BJ (cell line): ENCODE measurements at regions of chr17 and their contacts with region 1.

Region 1: GRCh38 chr17:28951991-28952975 is 965 bp upstream of the PHF12 start:
- DNase-seq: peak; percentile 98
- H3K4me3 ChIP-seq: peak overlapping the region; percentile 49
- H3K27me3 ChIP-seq: no peaks in the 10 kb centered on the region
- CTCF ChIP-seq: no peak

Region 2: GRCh38 chr17:28717578-28718333 is 234.5 kb before region 1 on chr17 and contains the start of gene RAB34:
- CTCF ChIA-PET with region 1: interaction called, 8 read pairs
- POLR2A ChIA-PET with region 1: interaction called, 14 read pairs
- DNase-seq: peak; percentile 46
- H3K4me3 ChIP-seq: peak within 1 kb of the TSS; percentile 55
- H3K27me3 ChIP-seq: no peaks in the 10 kb centered on the region
- CTCF ChIP-seq: peak; percentile 35
- polyA plus RNA-seq, gene RAB34: 307 and 473 TPM in 2 replicates

Region 3: GRCh38 chr17:28854457-28855350 is 97.6 kb before region 1 on chr17 and contains the start of gene ERAL1:
- CTCF ChIA-PET with region 1: no interaction called
- POLR2A ChIA-PET with region 1: no interaction called
- DNase-seq: peak; percentile 49
- H3K4me3 ChIP-seq: peak within 1 kb of the TSS; percentile 80
- H3K27me3 ChIP-seq: no peaks in the 10 kb centered on the region
- CTCF ChIP-seq: 0 out of 2 replicates have a peak, but pooled peaks have one; percentile 5
- polyA plus RNA-seq, gene ERAL1: 57.2 and 84.1 TPM in 2 replicates

Region 4: GRCh38 chr17:28967221-28968140 is 15.2 kb after region 1 on chr17:
- CTCF ChIA-PET with region 1: interaction called, 92 read pairs
- POLR2A ChIA-PET with region 1: no interaction called
- DNase-seq: no peak
- H3K4me3 ChIP-seq: no peak overlapping the region
- H3K27me3 ChIP-seq: peaks cover 9% of the 10 kb centered on the region
- CTCF ChIP-seq: no peak

Region 5: DNA sequence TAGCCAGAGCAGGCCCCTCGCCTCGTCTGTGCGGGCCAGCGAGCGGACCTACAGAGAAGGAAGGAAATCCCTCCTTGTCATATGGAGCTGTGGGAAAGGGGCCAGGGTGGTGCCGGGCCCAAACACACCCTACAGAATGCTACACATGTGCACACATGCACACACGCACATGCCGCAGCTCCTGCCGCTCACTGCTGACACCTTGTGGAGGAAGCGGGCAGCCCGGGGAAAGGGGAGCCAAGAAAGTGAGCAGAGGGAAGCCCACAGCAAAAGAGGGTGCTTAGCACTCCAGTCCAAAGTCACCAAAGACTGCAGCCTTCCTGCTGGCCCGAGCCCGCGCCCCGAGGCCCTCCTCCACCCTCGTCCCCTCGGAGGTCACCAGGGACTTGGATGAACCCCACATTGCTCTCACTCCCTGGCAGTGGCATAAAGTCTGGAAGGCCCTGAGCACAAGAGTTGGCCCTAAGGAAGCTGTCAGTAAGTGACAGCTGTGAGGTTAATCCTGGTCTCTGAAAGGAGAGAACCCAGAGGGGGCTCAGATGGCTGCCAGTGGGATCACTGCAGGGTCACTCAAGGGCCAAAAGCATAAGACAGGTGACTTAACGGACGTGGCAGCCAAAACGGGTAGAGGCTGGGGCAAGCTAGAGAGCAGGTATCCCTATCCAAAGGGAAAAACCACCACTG is 159.7 kb after region 1 on chr17:
- CTCF ChIA-PET with region 1: interaction called, 432 read pairs
- POLR2A ChIA-PET with region 1: no interaction called
- DNase-seq: no peak
- H3K4me3 ChIP-seq: no peak overlapping the region
- H3K27me3 ChIP-seq: no peaks in the 10 kb centered on the region
- CTCF ChIP-seq: peak; percentile 99

Region 6: GRCh38 chr17:29133146-29133713 is 180.9 kb after region 1 on chr17:
- CTCF ChIA-PET with region 1: interaction called, 11 read pairs
- POLR2A ChIA-PET with region 1: no interaction called
- DNase-seq: no peak
- H3K4me3 ChIP-seq: no peak overlapping the region
- H3K27me3 ChIP-seq: no peaks in the 10 kb centered on the region
- CTCF ChIP-seq: no peak